HCT116 (cell line): ENCODE measurements at regions of chr1 and their contacts with region 1.

Region 1: GRCh38 chr1:203273206-203273868 is 32.0 kb upstream of the BTG2 start:
- DNase-seq: peak; percentile 71
- ATAC-seq: peak; percentile 85
- H3K4me3 ChIP-seq: peak overlapping the region; percentile 15 to 45; a peak in 3 of 4 replicates
- H3K27ac ChIP-seq: no peak overlapping the region; the same call in 1 of the 2 replicates
- H3K4me1 ChIP-seq: peaks cover 0 to 29% of the 10 kb centered on the region in 2 experiments; a peak in 2 of 4 replicates
- H3K27me3 ChIP-seq: no peaks in the 10 kb centered on the region
- CTCF ChIP-seq: peak; percentile 93 to 98 (median 98)
- POLR2A ChIP-seq: no peak
- RAD21 ChIP-seq: peak; percentile 100

Region 2: GRCh38 chr1:203287109-203287893 is 14.0 kb after region 1 on chr1:
- CTCF ChIA-PET with region 1: interaction called, 20 read pairs
- POLR2A ChIA-PET with region 1: no interaction called
- RAD21 ChIA-PET with region 1: interaction called in 1 of 2 experiments, 3 read pairs
- intact Hi-C with region 1: no loop called
- DNase-seq: no peak
- ATAC-seq: no peak; the same call in 1 of the 2 replicates
- H3K4me3 ChIP-seq: no peak overlapping the region
- H3K27ac ChIP-seq: no peak overlapping the region; the same call in 1 of the 2 replicates
- H3K4me1 ChIP-seq: peaks cover 19 to 34% of the 10 kb centered on the region in 2 experiments
- H3K27me3 ChIP-seq: no peaks in the 10 kb centered on the region
- CTCF ChIP-seq: no peak
- POLR2A ChIP-seq: no peak
- RAD21 ChIP-seq: no peak

Region 3: DNA sequence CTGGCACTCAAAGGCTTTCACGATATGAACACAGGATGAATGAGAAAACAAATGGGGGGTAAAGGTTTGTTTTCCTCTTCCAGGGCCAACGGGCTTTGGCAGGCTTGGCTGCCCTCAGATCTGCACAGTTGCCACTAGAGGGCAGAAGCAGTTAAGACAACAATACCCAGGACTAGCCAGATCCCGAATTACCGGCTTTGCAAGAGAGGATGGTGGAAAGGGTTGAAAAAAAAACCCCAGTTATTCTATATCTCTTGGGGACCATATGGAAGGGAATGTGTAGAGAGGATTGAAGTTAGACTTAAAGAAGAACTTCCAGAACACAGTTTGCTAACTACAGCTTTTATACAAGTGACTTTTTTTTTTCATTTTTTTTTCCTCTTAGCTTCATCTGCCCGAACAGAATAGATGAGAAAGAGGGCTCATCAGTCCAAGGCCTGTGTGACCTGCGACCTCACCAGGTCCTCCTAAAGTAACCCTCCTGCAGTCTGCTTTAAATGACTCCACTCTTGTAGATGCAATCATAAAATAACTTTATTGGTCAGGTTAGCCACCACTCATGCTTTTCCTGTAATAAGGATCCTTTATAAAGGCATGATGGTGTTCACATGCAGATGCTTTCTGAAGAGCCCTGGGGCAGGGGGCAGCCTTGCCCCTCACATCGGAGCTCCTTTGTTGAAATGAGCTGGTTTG is 66.9 kb after region 1 on chr1:
- CTCF ChIA-PET with region 1: interaction called, 45 read pairs
- POLR2A ChIA-PET with region 1: no interaction called
- RAD21 ChIA-PET with region 1: interaction called in 1 of 2 experiments, 6 read pairs
- intact Hi-C with region 1: loop called (anchors 1 kb)
- DNase-seq: peak; percentile 76
- ATAC-seq: peak; percentile 76
- H3K4me3 ChIP-seq: no peak overlapping the region
- H3K27ac ChIP-seq: no peak overlapping the region
- H3K4me1 ChIP-seq: peaks cover 0 to 6% of the 10 kb centered on the region in 2 experiments; a peak in 2 of 4 replicates
- H3K27me3 ChIP-seq: peaks cover 15% of the 10 kb centered on the region; the same call in 1 of the 2 replicates
- CTCF ChIP-seq: peak; percentile 88 to 96 (median 94)
- POLR2A ChIP-seq: no peak
- RAD21 ChIP-seq: peak; percentile 95

Region 4: GRCh38 chr1:203486618-203487370 is 213.5 kb after region 1 on chr1:
- CTCF ChIA-PET with region 1: interaction called, 28 read pairs
- POLR2A ChIA-PET with region 1: no interaction called
- RAD21 ChIA-PET with region 1: interaction called, 3 to 5 read pairs
- intact Hi-C with region 1: loop called (anchors 1 kb)
- DNase-seq: no peak
- ATAC-seq: no peak
- H3K4me3 ChIP-seq: no peak overlapping the region; a peak in 1 of 4 replicates
- H3K27ac ChIP-seq: peak overlapping the region; percentile 50; the same call in 1 of the 2 replicates
- H3K4me1 ChIP-seq: peaks cover 4 to 12% of the 10 kb centered on the region in 2 experiments; a peak in 2 of 4 replicates
- H3K27me3 ChIP-seq: no peaks in the 10 kb centered on the region
- CTCF ChIP-seq: no peak
- POLR2A ChIP-seq: no peak
- RAD21 ChIP-seq: no peak

Region 5: GRCh38 chr1:203996126-203996525 is 722.8 kb after region 1 on chr1:
- CTCF ChIA-PET with region 1: no interaction called
- POLR2A ChIA-PET with region 1: no interaction called
- RAD21 ChIA-PET with region 1: no interaction called
- intact Hi-C with region 1: no loop called
- DNase-seq: no peak
- ATAC-seq: no peak; the same call in 1 of the 2 replicates
- H3K4me3 ChIP-seq: no peak overlapping the region
- H3K27ac ChIP-seq: no peak overlapping the region
- H3K4me1 ChIP-seq: peaks cover 2 to 3% of the 10 kb centered on the region in 2 experiments; a peak in 2 of 4 replicates
- H3K27me3 ChIP-seq: no peaks in the 10 kb centered on the region
- CTCF ChIP-seq: no peak
- POLR2A ChIP-seq: no peak
- RAD21 ChIP-seq: no peak

Region 6: DNA sequence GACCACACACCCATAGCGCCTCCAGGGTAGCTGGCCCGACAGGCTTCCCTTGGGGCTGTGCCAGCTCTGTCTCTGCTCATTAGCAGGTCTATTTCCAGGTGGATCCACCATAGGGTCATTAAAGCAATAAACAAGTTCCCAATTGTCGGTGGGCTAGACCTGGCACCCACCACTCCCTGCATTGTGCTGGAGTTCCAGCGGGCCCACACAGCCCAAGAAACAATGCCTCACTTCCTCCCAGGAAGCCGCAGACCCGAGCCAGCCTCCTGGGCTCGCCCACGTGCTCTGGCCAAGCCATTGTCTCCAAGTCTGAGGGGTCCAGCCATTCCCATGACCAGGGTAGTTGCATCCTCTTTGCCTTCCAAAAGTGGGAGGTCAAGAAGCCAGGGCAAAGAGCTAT is 772.1 kb after region 1 on chr1:
- CTCF ChIA-PET with region 1: no interaction called
- POLR2A ChIA-PET with region 1: no interaction called
- RAD21 ChIA-PET with region 1: no interaction called
- intact Hi-C with region 1: no loop called
- DNase-seq: no peak
- ATAC-seq: no peak
- H3K4me3 ChIP-seq: no peak overlapping the region
- H3K27ac ChIP-seq: no peak overlapping the region
- H3K4me1 ChIP-seq: peaks cover 0 to 8% of the 10 kb centered on the region in 2 experiments; a peak in 1 of 4 replicates
- H3K27me3 ChIP-seq: no peaks in the 10 kb centered on the region
- CTCF ChIP-seq: no peak
- POLR2A ChIP-seq: no peak
- RAD21 ChIP-seq: no peak